ENCODE measurements at regions of chrX and their contacts with region 1.

Region 1: GRCh38 chrX:43557792-43558191 is 98.3 kb upstream of the MAOA start:
- DNase-seq: peak; percentile 67
- H3K4me3 Mint-ChIP-seq: no peak overlapping the region
- H3K27ac Mint-ChIP-seq: no peak overlapping the region
- H3K4me1 Mint-ChIP-seq: peaks cover 17% of the 10 kb centered on the region
- H3K27me3 Mint-ChIP-seq: peaks cover 74% of the 10 kb centered on the region
- CTCF ChIP-seq: peak; percentile 61

Region 2: GRCh38 chrX:41558531-41558930 is 1999.3 kb before region 1 on chrX:
- CTCF ChIA-PET with region 1: no interaction called
- POLR2A ChIA-PET with region 1: no interaction called
- intact Hi-C with region 1: loop called (anchors 10 kb)
- DNase-seq: peak; percentile 31
- H3K4me3 Mint-ChIP-seq: no peak overlapping the region
- H3K27ac Mint-ChIP-seq: no peak overlapping the region
- H3K4me1 Mint-ChIP-seq: no peaks in the 10 kb centered on the region
- H3K27me3 Mint-ChIP-seq: peaks cover 46% of the 10 kb centered on the region
- CTCF ChIP-seq: peak; percentile 45

Region 3: DNA sequence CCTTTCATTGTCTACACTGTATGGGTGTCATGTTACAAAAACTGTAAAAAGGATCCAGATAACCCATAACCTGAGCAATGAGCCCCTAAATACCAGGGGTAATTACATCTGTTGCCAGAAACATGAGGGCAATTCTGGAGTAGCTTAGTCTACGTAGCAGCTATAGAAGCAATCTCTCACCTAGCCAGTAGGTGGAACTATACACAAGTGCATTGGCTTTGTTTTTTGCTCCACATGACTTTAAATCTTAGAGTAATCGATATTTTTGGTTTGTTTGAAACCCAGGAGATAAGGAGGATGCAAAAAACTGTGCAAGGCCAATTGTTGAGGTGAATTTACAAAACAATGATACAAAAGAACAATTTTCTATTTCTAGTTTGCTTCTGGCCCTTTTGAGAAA is 1776.3 kb before region 1 on chrX:
- CTCF ChIA-PET with region 1: interaction called, 5 read pairs
- POLR2A ChIA-PET with region 1: no interaction called
- intact Hi-C with region 1: loop called (anchors 1 kb)
- DNase-seq: peak; percentile 47
- H3K4me3 Mint-ChIP-seq: no peak overlapping the region
- H3K27ac Mint-ChIP-seq: no peak overlapping the region
- H3K4me1 Mint-ChIP-seq: peaks cover 7% of the 10 kb centered on the region
- H3K27me3 Mint-ChIP-seq: peaks cover 21% of the 10 kb centered on the region
- CTCF ChIP-seq: peak; percentile 65

Region 4: GRCh38 chrX:41796577-41796976 is 1761.2 kb before region 1 on chrX:
- CTCF ChIA-PET with region 1: interaction called, 17 read pairs
- POLR2A ChIA-PET with region 1: no interaction called
- intact Hi-C with region 1: no loop called
- DNase-seq: no peak
- H3K4me3 Mint-ChIP-seq: no peak overlapping the region
- H3K27ac Mint-ChIP-seq: no peak overlapping the region
- H3K4me1 Mint-ChIP-seq: no peaks in the 10 kb centered on the region
- H3K27me3 Mint-ChIP-seq: peaks cover 30% of the 10 kb centered on the region
- CTCF ChIP-seq: no peak

Region 5: GRCh38 chrX:43349363-43349762 is 208.4 kb before region 1 on chrX:
- CTCF ChIA-PET with region 1: interaction called, 47 read pairs
- POLR2A ChIA-PET with region 1: interaction called, 5 read pairs
- intact Hi-C with region 1: loop called (anchors 1 kb)
- DNase-seq: peak; percentile 70
- H3K4me3 Mint-ChIP-seq: no peak overlapping the region
- H3K27ac Mint-ChIP-seq: no peak overlapping the region
- H3K4me1 Mint-ChIP-seq: no peaks in the 10 kb centered on the region
- H3K27me3 Mint-ChIP-seq: peaks cover 87% of the 10 kb centered on the region
- CTCF ChIP-seq: peak; percentile 80

Region 6: DNA sequence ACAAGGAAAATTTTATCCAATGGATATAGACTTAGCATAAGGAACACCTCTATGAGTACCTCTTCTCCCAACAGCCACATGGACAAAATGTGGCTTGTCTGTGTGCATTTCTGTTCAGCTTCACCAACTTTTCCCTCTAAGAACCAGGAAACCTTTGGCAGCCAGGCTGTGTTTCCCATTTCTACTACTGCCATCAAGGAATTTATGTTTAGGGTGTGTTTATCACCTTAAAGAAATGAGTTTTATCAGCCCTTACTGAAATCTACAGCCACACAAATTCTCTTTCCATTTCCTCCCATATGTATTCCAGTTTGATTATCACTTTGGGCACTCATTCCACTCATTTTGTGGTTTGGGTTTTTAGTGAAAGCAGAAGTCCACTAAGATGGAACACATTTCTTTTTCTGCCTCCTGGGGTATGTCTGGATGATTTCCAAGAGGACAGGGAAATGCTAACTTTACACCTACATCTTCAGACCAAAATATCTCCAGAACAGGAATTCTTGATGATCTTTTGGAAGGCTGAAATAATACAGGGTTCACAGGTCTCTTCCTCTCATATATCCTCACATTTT is 15.7 kb after region 1 on chrX:
- CTCF ChIA-PET with region 1: interaction called, 13 read pairs
- POLR2A ChIA-PET with region 1: no interaction called
- intact Hi-C with region 1: no loop called
- DNase-seq: no peak
- H3K4me3 Mint-ChIP-seq: no peak overlapping the region
- H3K27ac Mint-ChIP-seq: no peak overlapping the region
- H3K4me1 Mint-ChIP-seq: no peaks in the 10 kb centered on the region
- H3K27me3 Mint-ChIP-seq: peaks cover 21% of the 10 kb centered on the region
- CTCF ChIP-seq: no peak

Region 7: DNA sequence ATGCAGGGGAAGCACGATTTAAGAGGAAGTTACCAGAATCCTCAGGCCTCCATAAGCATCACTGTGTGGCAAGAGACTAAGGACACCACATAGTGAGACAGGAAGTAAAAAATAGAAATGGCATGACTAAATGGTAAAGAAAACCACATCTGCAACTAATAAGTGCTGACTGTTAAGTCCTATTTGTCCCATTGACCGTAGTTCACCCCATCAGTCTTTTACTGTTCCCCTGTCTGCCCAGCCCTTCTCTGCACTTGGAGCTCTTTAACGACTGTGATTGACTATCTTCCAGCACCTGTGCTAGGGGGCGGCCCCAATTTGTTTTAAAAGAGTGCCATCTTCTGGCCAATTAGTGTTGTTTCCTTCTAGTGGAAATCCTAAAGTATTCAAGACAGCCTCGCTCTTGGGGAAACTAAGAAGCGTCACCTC is 192.5 kb after region 1 on chrX:
- CTCF ChIA-PET with region 1: interaction called, 48 read pairs
- POLR2A ChIA-PET with region 1: interaction called, 7 read pairs
- intact Hi-C with region 1: loop called (anchors 1 kb)
- DNase-seq: peak; percentile 82
- H3K4me3 Mint-ChIP-seq: no peak overlapping the region
- H3K27ac Mint-ChIP-seq: no peak overlapping the region
- H3K4me1 Mint-ChIP-seq: peaks cover 8% of the 10 kb centered on the region
- H3K27me3 Mint-ChIP-seq: peaks cover 68% of the 10 kb centered on the region
- CTCF ChIP-seq: peak; percentile 66

Measured in MCF 10A (cell line).